ENCODE measurements at regions of chr1 and their contacts with region 1.

Region 1: GRCh38 chr1:228664399-228664914 is 70.8 kb upstream of the RHOU start:
- DNase-seq: peak; percentile 88
- H3K4me3 Mint-ChIP-seq: no peak overlapping the region
- H3K27ac Mint-ChIP-seq: no peak overlapping the region
- H3K4me1 Mint-ChIP-seq: no peaks in the 10 kb centered on the region
- H3K27me3 Mint-ChIP-seq: no peaks in the 10 kb centered on the region

Region 2: DNA sequence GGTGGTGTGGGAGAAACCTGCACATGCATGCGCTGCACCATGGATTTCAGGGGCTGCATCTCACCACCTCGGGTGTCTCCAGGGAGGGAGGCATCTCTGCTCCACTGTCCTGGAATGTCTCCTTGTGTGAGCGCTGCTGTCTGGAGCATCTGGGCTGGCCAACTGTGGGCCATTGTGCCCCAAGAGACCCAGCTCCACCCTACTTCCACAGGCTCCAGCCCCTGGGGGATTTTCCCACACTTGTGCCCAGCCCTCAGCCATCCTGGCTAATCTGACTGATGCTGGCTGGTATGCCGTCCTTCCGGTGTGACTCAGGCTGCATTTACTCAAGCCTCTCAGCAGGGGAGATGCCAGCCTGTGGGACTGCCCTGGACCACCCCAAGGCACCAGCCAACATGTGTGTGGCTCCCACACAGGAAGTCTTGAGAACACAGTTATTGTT is 319.8 kb before region 1 on chr1:
- CTCF ChIA-PET with region 1: no interaction called
- intact Hi-C with region 1: no loop called
- DNase-seq: no peak
- H3K4me3 Mint-ChIP-seq: no peak overlapping the region
- H3K27ac Mint-ChIP-seq: no peak overlapping the region
- H3K4me1 Mint-ChIP-seq: no peaks in the 10 kb centered on the region
- H3K27me3 Mint-ChIP-seq: no peaks in the 10 kb centered on the region

Region 3: DNA sequence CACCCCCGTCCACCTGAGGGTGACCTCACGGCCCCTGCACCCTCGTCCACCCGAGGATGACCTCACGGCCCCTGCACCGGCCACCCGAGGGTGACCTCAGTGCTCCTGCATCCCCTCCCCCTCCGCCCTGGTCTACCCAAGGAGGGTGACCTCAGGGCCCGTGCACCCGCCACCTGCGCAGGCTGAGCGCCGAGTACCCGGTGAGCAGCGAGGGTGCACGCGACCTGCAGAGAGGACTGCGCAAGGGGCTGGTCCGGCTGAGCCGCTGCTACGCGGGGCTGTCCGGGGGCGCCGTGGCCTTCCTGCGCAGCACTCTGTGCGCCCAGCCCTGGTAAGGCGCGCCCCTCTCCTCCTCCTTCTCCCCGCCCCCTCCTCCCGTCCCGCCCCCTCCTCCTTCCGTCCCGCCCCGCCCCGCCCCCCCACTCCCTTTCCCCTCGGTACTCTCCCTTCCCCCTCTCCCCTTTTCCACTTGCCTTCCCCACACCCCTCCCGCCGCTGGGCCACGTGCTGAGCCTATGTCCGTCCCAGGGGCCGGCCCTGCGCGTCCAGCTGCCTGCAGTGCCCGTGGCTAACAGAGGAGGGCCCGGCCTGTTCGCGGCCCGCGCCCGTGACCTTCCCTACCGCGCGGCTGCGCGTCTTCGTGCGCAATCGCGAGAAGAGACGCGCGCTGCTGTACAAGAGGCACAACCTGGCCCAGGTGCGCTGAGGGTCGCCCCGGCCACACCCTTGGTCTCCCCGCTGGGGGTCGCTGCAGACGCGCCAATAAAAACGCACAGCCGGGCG is 286.2 kb before region 1 on chr1:
- CTCF ChIA-PET with region 1: no interaction called
- intact Hi-C with region 1: loop called (anchors 5 kb)
- DNase-seq: peak; percentile 80
- H3K4me3 Mint-ChIP-seq: peak overlapping the region; percentile 74
- H3K27ac Mint-ChIP-seq: no peak overlapping the region
- H3K4me1 Mint-ChIP-seq: peaks cover 11% of the 10 kb centered on the region
- H3K27me3 Mint-ChIP-seq: peaks cover 14% of the 10 kb centered on the region

Region 4: GRCh38 chr1:228860911-228861831 is 196.7 kb after region 1 on chr1:
- CTCF ChIA-PET with region 1: no interaction called
- intact Hi-C with region 1: no loop called
- DNase-seq: peak; percentile 35
- H3K4me3 Mint-ChIP-seq: no peak overlapping the region
- H3K27ac Mint-ChIP-seq: no peak overlapping the region
- H3K4me1 Mint-ChIP-seq: peaks cover 20% of the 10 kb centered on the region
- H3K27me3 Mint-ChIP-seq: no peaks in the 10 kb centered on the region

Region 5: GRCh38 chr1:229514578-229515275 is 850.3 kb after region 1 on chr1:
- CTCF ChIA-PET with region 1: no interaction called
- intact Hi-C with region 1: loop called (anchors 10 kb)
- DNase-seq: peak; percentile 75
- H3K4me3 Mint-ChIP-seq: no peak overlapping the region
- H3K27ac Mint-ChIP-seq: no peak overlapping the region
- H3K4me1 Mint-ChIP-seq: peaks cover 8% of the 10 kb centered on the region
- H3K27me3 Mint-ChIP-seq: no peaks in the 10 kb centered on the region

Measured in activated naive CD4-positive, alpha-beta T cell treated with anti-CD3 and anti-CD28 coated beads for 36 hours (primary cell).